ENCODE measurements at regions of chr4 and their contacts with region 1.

Region 1: GRCh38 chr4:138242076-138242833 is at the start of gene SLC7A11:
- DNase-seq: peak; percentile 98
- H3K4me3 ChIP-seq: peak within 1 kb of the TSS; percentile 71 to 94 (median 86)
- H3K27ac ChIP-seq: peak within 1 kb of the TSS; percentile 100
- H3K4me1 ChIP-seq: peaks cover 11% of the 10 kb centered on the region
- H3K27me3 ChIP-seq: no peaks in the 10 kb centered on the region
- CTCF ChIP-seq: peak in 1 of 2 donors; percentile 18
- total RNA-seq, gene SLC7A11: 80.2 to 248 TPM

Region 2: GRCh38 chr4:138205531-138206233 is 36.6 kb before region 1 on chr4:
- CTCF ChIA-PET with region 1: no interaction called
- dilution Hi-C with region 1: no loop called
- in situ Hi-C with region 1: no loop called
- intact Hi-C with region 1: loop called (anchors 5 kb)
- DNase-seq: no peak
- H3K4me3 ChIP-seq: no peak overlapping the region
- H3K27ac ChIP-seq: no peak overlapping the region
- H3K4me1 ChIP-seq: peaks cover 11% of the 10 kb centered on the region
- H3K27me3 ChIP-seq: no peaks in the 10 kb centered on the region
- CTCF ChIP-seq: no peak

Region 3: DNA sequence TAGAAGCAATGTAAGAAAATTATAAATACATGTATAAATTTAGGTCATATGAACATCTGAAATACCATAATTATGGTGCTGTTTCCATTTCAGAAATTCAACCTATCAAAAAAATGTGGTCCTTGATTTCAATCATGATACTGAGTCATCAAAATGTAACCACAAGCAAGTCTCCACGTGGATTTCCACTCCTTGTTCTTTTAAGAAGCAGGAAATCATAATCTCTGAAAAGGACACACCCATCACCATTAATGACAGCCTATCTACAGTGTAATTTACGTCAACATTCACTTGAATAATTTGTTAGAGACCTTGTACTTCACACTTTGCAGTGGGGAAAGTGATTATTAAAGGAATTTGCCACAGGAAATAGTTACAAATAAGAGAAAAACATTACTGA is 17.5 kb after region 1 on chr4:
- CTCF ChIA-PET with region 1: no interaction called
- dilution Hi-C with region 1: no loop called
- in situ Hi-C with region 1: no loop called
- intact Hi-C with region 1: loop called (anchors 1 kb)
- DNase-seq: peak; percentile 84
- H3K4me3 ChIP-seq: peak overlapping the region in 2 of 3 experiments; percentile 5 to 33
- H3K27ac ChIP-seq: peak overlapping the region; percentile 100
- H3K4me1 ChIP-seq: peaks cover 33% of the 10 kb centered on the region
- H3K27me3 ChIP-seq: no peaks in the 10 kb centered on the region
- CTCF ChIP-seq: no peak

Region 4: DNA sequence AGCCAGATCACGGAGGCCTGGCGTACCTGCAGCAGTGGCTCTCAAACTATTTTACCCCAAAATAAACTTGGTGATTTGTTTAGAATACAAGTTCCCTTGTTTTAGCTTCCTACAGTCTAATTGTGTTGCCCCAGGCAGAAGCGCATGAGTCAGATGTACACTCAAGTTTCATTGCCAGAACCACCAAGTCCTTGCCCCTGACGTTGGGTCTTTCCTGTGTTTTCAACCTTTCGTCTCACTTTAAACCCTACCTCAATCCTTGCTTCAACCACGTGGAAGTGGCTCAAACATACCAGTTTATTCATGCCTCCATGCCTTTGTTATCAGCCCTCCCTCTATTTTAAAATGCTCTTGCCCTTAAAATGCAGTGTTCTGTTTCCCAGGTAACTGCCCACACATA is 66.2 kb after region 1 on chr4:
- CTCF ChIA-PET with region 1: interaction called, 3 read pairs
- dilution Hi-C with region 1: loop called (anchors 5 kb)
- in situ Hi-C with region 1: no loop called
- intact Hi-C with region 1: loop called (anchors 1 kb)
- DNase-seq: peak; percentile 99
- H3K4me3 ChIP-seq: peak overlapping the region in 1 of 3 experiments; percentile 32
- H3K27ac ChIP-seq: peak overlapping the region; percentile 98
- H3K4me1 ChIP-seq: peaks cover 43% of the 10 kb centered on the region
- H3K27me3 ChIP-seq: no peaks in the 10 kb centered on the region
- CTCF ChIP-seq: no peak

Region 5: GRCh38 chr4:138494931-138495330 is 252.7 kb after region 1 on chr4:
- CTCF ChIA-PET with region 1: interaction called, 4 read pairs
- dilution Hi-C with region 1: no loop called
- in situ Hi-C with region 1: loop called in 1 of 2 experiments (anchors 25 kb)
- intact Hi-C with region 1: loop called (anchors 2 kb)
- DNase-seq: peak; percentile 54
- H3K4me3 ChIP-seq: no peak overlapping the region
- H3K27ac ChIP-seq: no peak overlapping the region
- H3K4me1 ChIP-seq: no peaks in the 10 kb centered on the region
- H3K27me3 ChIP-seq: no peaks in the 10 kb centered on the region
- CTCF ChIP-seq: peak; percentile 20 to 40

Region 6: DNA sequence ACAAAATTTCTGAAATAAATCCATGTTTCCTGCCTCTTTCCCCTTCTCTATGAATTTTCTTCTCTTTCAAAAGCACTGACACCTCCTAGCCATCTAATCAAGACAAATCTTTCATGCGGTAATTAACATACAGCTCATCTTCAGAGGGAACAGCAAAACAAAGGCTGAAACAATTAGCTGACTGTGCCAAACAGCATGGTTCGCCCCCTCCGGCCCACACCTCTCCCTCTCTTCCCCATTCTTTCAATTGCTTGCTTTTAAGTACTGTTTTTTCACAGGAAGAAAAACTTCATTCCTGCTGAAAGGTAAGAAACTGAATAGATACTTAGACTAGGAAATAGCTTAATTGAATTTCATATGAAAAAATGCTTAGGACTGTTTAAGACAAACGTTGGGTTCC is 482.3 kb after region 1 on chr4:
- CTCF ChIA-PET with region 1: no interaction called
- dilution Hi-C with region 1: no loop called
- in situ Hi-C with region 1: no loop called
- intact Hi-C with region 1: no loop called
- DNase-seq: no peak
- H3K4me3 ChIP-seq: no peak overlapping the region
- H3K27ac ChIP-seq: no peak overlapping the region
- H3K4me1 ChIP-seq: no peaks in the 10 kb centered on the region
- H3K27me3 ChIP-seq: peaks cover 11% of the 10 kb centered on the region
- CTCF ChIP-seq: no peak

Measured in mammary epithelial cell (primary cell).